ENCODE measurements at regions of chr3 and their contacts with region 1.

Region 1: DNA sequence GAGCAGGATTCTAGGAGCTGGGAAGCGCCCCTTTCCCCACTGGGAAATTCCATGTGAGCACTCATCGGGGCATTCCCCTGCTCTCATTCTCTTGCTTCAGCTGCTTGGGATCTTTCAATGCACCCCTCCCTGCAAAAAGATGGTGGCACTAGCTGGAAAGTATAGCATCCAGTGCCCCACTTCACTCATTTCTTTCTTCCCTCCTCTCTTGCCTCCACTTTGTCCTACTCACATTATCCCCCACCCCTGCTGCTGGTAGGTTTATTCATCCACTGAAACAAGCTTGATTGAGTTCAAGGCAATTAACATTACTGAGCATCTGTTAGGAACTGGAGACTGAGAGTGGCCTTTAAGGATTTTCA is 84.8 kb upstream of the LIMD1 start:
- DNase-seq: no peak
- H3K4me3 ChIP-seq: no peak overlapping the region
- H3K27ac ChIP-seq: no peak overlapping the region
- H3K4me1 ChIP-seq: no peaks in the 10 kb centered on the region
- H3K27me3 ChIP-seq: no peaks in the 10 kb centered on the region
- CTCF ChIP-seq: no peak
- POLR2A ChIP-seq: no peak

Region 2: GRCh38 chr3:44960387-44961026 is 549.2 kb before region 1 on chr3:
- intact Hi-C with region 1: no loop called
- DNase-seq: no peak
- H3K4me3 ChIP-seq: no peak overlapping the region
- H3K27ac ChIP-seq: no peak overlapping the region
- H3K4me1 ChIP-seq: no peaks in the 10 kb centered on the region
- H3K27me3 ChIP-seq: no peaks in the 10 kb centered on the region
- CTCF ChIP-seq: no peak
- POLR2A ChIP-seq: no peak

Region 3: GRCh38 chr3:45656575-45657363 is 147.0 kb after region 1 on chr3:
- intact Hi-C with region 1: loop called (anchors 5 kb)
- DNase-seq: peak; percentile 94
- H3K4me3 ChIP-seq: no peak overlapping the region
- H3K27ac ChIP-seq: no peak overlapping the region
- H3K4me1 ChIP-seq: peaks cover 2% of the 10 kb centered on the region
- H3K27me3 ChIP-seq: no peaks in the 10 kb centered on the region
- CTCF ChIP-seq: peak; percentile 90 to 91 (median 91)
- POLR2A ChIP-seq: no peak